Mammary epithelial cell (primary cell): ENCODE measurements at regions of chr7 and their contacts with region 1.

Region 1: GRCh38 chr7:132138817-132139216 is 437.5 kb downstream of the PLXNA4 start:
- DNase-seq: peak; percentile 61
- H3K4me3 ChIP-seq: no peak overlapping the region
- H3K27ac ChIP-seq: no peak overlapping the region
- H3K4me1 ChIP-seq: peaks cover 19% of the 10 kb centered on the region
- H3K27me3 ChIP-seq: no peaks in the 10 kb centered on the region
- CTCF ChIP-seq: no peak

Region 2: GRCh38 chr7:132019703-132020102 is 119.1 kb before region 1 on chr7:
- CTCF ChIA-PET with region 1: no interaction called
- dilution Hi-C with region 1: no loop called
- in situ Hi-C with region 1: no loop called
- intact Hi-C with region 1: no loop called
- DNase-seq: no peak
- H3K4me3 ChIP-seq: no peak overlapping the region
- H3K27ac ChIP-seq: no peak overlapping the region
- H3K4me1 ChIP-seq: no peaks in the 10 kb centered on the region
- H3K27me3 ChIP-seq: no peaks in the 10 kb centered on the region
- CTCF ChIP-seq: no peak

Region 3: DNA sequence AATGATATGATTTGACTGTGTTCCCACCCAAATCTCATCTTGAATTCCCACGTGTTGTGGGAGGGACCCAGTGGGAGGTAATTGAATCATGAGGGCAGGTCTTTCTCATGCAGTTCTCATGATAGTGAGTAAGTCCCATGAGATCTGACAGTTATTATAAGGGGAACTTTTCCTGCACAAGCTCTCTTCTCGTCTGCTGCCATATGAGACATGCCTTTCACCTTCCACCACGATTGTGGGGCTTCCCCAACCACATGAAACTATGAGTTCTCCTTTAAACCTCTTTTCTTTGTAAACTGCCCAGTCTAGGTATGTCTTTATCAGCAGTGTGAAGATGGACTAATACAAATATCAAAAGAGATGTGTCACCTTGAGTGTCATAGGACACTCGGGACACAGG is 79.7 kb before region 1 on chr7:
- CTCF ChIA-PET with region 1: no interaction called
- dilution Hi-C with region 1: loop called (anchors 5 kb)
- in situ Hi-C with region 1: no loop called
- intact Hi-C with region 1: loop called (anchors 2 kb)
- DNase-seq: peak; percentile 17
- H3K4me3 ChIP-seq: no peak overlapping the region
- H3K27ac ChIP-seq: no peak overlapping the region
- H3K4me1 ChIP-seq: no peaks in the 10 kb centered on the region
- H3K27me3 ChIP-seq: no peaks in the 10 kb centered on the region
- CTCF ChIP-seq: no peak

Region 4: DNA sequence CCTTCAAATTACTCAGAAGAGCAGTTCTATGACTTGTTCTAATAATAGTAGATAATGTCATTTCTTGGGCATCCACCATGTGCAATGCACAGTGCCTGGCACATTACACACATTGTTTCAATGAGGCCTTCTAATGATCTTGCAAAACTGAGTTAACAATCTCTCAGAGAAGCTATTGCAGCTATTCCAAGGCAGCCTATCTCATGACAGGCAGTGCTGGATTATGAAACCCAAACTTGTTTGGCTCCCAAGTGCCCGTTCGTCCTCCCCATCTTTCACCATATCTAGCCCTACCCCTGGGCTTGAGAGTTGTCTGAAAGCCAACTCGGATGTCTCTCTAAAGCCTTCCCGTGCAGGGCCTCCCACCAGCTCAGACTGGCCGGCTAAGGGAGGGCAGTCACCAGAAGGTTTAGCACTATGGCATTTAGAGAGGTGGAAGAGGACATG is 32.3 kb after region 1 on chr7:
- CTCF ChIA-PET with region 1: no interaction called
- dilution Hi-C with region 1: no loop called
- in situ Hi-C with region 1: no loop called
- intact Hi-C with region 1: no loop called
- DNase-seq: no peak
- H3K4me3 ChIP-seq: no peak overlapping the region
- H3K27ac ChIP-seq: no peak overlapping the region
- H3K4me1 ChIP-seq: no peaks in the 10 kb centered on the region
- H3K27me3 ChIP-seq: no peaks in the 10 kb centered on the region
- CTCF ChIP-seq: no peak

Region 5: GRCh38 chr7:132783824-132784223 is 645.0 kb after region 1 on chr7:
- CTCF ChIA-PET with region 1: no interaction called
- dilution Hi-C with region 1: no loop called
- in situ Hi-C with region 1: no loop called
- intact Hi-C with region 1: no loop called
- DNase-seq: peak; percentile 63
- H3K4me3 ChIP-seq: no peak overlapping the region
- H3K27ac ChIP-seq: no peak overlapping the region
- H3K4me1 ChIP-seq: peaks cover 7% of the 10 kb centered on the region
- H3K27me3 ChIP-seq: no peaks in the 10 kb centered on the region
- CTCF ChIP-seq: no peak